Activated naive CD4-positive, alpha-beta T cell treated with anti-CD3 and anti-CD28 coated beads for 36 hours (primary cell): ENCODE measurements at regions of chr6 and their contacts with region 1.

Region 1: DNA sequence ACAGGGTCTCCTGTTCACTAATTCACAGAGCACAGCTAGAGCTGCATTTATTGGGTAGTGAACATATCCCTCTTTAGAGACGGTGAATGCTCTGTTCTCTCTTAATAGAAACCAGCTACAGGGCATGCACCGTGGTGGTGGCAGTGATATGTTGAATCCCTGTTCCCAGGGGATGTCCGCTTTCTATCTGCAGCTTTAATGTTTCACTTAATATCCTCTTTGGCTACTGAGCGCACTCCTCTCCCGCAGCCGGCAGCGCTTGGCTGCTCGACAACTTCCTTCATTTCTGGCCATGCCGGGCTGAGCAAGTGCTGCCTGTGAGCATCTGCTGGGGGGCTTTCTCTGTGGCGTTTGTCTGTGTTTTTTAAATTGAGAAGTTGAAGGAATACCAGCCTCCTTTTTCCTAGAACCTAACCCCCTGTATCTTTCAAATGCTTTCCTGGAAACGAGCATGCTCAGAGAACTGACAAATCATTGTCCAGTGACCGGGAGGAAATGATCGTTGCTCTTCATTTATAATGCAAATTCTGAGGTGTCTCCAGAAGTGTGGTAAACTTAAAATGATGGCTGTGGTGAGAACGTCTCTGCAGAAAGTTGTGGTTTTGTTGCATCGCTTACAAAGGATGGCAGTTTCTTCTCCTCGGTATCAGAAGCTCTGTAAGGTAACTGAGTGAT is 297.9 kb downstream of the UTRN start:
- DNase-seq: peak; percentile 57
- H3K4me3 Mint-ChIP-seq: peak overlapping the region; percentile 67
- H3K27ac Mint-ChIP-seq: peak overlapping the region; percentile 20
- H3K4me1 Mint-ChIP-seq: peaks cover 15% of the 10 kb centered on the region
- H3K27me3 Mint-ChIP-seq: no peaks in the 10 kb centered on the region

Region 2: GRCh38 chr6:144104898-144105487 is 478.1 kb before region 1 on chr6:
- CTCF ChIA-PET with region 1: no interaction called
- intact Hi-C with region 1: loop called (anchors 5 kb)
- DNase-seq: peak; percentile 48
- H3K4me3 Mint-ChIP-seq: no peak overlapping the region
- H3K27ac Mint-ChIP-seq: no peak overlapping the region
- H3K4me1 Mint-ChIP-seq: peaks cover 11% of the 10 kb centered on the region
- H3K27me3 Mint-ChIP-seq: no peaks in the 10 kb centered on the region

Region 3: DNA sequence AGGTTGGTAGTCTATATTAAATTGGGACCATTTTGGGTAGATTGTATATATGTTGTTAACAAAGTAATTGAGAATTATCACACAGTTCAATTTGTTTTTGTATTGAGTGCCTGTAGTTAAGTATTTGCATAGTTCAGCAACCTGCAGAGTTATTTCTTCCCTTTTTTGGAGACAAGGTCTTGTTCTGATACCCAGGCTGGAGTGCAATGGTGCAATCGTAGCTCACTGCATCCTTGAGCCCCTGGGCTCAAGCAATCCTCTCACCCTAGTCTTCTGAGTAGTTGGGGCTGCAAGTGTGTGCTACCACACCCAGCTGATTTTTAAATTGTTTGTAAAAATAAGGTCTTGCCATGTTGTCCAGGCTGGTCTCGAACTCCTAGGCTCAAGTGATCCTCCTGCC is 47.4 kb before region 1 on chr6:
- CTCF ChIA-PET with region 1: no interaction called
- intact Hi-C with region 1: no loop called
- DNase-seq: no peak
- H3K4me3 Mint-ChIP-seq: no peak overlapping the region
- H3K27ac Mint-ChIP-seq: no peak overlapping the region
- H3K4me1 Mint-ChIP-seq: peaks cover 2% of the 10 kb centered on the region
- H3K27me3 Mint-ChIP-seq: no peaks in the 10 kb centered on the region

Region 4: GRCh38 chr6:144597511-144597910 is 14.4 kb after region 1 on chr6:
- CTCF ChIA-PET with region 1: interaction called, 9 read pairs
- intact Hi-C with region 1: loop called (anchors 1 kb)
- DNase-seq: peak; percentile 18
- H3K4me3 Mint-ChIP-seq: no peak overlapping the region
- H3K27ac Mint-ChIP-seq: no peak overlapping the region
- H3K4me1 Mint-ChIP-seq: peaks cover 41% of the 10 kb centered on the region
- H3K27me3 Mint-ChIP-seq: no peaks in the 10 kb centered on the region

Region 5: GRCh38 chr6:144778773-144779492 is 195.9 kb after region 1 on chr6:
- CTCF ChIA-PET with region 1: interaction called, 4 read pairs
- intact Hi-C with region 1: loop called (anchors 2 kb)
- DNase-seq: no peak
- H3K4me3 Mint-ChIP-seq: no peak overlapping the region
- H3K27ac Mint-ChIP-seq: no peak overlapping the region
- H3K4me1 Mint-ChIP-seq: no peaks in the 10 kb centered on the region
- H3K27me3 Mint-ChIP-seq: no peaks in the 10 kb centered on the region

Region 6: GRCh38 chr6:144820270-144820669 is 237.2 kb after region 1 on chr6:
- CTCF ChIA-PET with region 1: no interaction called
- intact Hi-C with region 1: no loop called
- DNase-seq: no peak
- H3K4me3 Mint-ChIP-seq: no peak overlapping the region
- H3K27ac Mint-ChIP-seq: no peak overlapping the region
- H3K4me1 Mint-ChIP-seq: no peaks in the 10 kb centered on the region
- H3K27me3 Mint-ChIP-seq: no peaks in the 10 kb centered on the region

Region 7: DNA sequence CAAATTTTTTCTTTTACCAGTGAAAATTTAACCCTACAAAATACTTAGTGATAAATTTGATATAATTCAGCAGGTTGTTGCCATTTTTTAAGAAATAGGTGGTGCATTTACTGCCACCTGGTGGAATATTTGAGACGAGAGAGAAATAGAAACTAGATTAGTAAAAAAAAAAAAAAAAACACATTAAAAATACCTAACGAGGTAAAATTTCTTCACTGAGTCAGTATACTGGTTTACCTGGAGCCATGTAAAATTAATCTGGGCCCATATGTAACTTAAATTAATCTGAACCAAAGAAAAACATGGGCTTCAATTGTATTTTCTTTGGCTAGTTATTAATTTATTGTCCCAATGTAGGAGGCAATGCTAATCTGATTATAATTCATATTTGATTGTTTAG is 631.5 kb after region 1 on chr6:
- CTCF ChIA-PET with region 1: no interaction called
- intact Hi-C with region 1: loop called (anchors 1 kb)
- DNase-seq: no peak
- H3K4me3 Mint-ChIP-seq: no peak overlapping the region
- H3K27ac Mint-ChIP-seq: no peak overlapping the region
- H3K4me1 Mint-ChIP-seq: peaks cover 7% of the 10 kb centered on the region
- H3K27me3 Mint-ChIP-seq: peaks cover 6% of the 10 kb centered on the region

Region 8: DNA sequence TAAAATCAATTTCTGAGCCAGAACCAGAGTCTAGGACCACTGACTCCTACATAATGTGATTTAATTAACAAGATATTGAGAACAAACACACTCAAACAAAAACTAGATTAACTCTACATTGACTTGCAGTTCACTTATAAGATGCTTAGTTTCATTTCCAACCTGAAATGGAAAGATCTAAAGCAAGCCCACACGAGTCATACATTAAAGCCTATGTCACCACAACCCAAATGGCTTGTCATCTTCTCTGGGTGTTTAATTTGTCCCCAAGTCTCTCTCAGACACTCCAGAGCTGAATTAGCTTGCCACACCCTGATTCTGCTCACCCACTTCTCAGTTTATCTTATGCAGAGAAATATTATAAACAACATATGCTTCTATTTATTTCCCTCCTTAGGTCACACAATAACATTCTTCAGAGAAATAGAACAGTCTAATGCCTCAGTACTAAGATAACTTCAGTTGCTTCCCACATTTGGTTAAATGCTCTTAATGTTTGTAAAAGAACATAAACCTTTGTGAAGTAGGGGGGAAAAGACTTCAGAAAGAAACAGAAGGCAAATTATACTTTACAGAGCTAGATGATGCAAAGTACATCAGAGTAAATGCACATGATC is 1240.4 kb after region 1 on chr6:
- CTCF ChIA-PET with region 1: no interaction called
- intact Hi-C with region 1: loop called (anchors 10 kb)
- DNase-seq: peak; percentile 22
- H3K4me3 Mint-ChIP-seq: no peak overlapping the region
- H3K27ac Mint-ChIP-seq: no peak overlapping the region
- H3K4me1 Mint-ChIP-seq: peaks cover 37% of the 10 kb centered on the region
- H3K27me3 Mint-ChIP-seq: no peaks in the 10 kb centered on the region